Activated CD8-positive, alpha-beta memory T cell treated with anti-CD3 and anti-CD28 coated beads, Interleukin-2, amount 10 ng/mL, durations not matched to agents 7 days and 5 days (primary cell): ENCODE measurements at regions of chr6 and their contacts with region 1.

Region 1: DNA sequence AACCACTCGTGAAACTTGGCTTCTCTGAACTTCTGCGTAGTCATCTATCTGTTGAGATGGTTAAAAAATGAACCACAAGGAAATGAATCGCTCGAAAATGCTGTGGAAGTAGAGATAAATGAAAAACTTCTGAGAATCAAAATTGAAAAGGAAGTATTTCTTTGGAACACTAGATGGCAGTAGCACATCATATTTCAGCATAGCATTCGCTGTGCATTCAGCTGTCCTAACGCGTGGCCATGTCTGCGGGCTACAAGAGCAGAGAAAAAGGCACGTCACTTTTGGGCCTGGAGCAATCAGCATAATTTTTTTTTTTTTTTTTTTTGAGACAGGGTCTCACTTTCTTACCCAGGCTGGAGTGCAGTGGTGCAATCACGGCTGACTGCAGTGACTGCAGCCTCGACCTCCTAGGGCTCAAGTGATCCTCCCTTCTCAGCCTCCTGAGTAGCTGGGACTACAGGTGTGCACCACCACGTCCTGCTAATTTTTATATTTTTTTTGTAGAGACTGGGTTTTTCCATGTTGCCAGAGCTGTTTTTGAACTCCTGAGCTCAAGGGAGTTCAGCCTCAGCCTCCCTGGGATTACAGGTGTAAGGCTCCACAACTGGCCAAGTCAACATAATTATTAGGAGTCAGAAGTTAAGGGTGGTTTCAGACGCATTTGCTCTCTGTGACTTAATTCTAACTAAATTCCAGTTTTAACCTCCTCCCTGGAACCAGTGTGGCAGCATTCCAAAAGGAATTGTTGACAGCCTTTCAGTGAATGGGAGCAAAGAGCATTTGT is 8.8 kb upstream of the PERP start:
- DNase-seq: peak; percentile 58
- ATAC-seq: peak; percentile 88
- H3K4me3 Mint-ChIP-seq: no peak overlapping the region
- H3K27ac Mint-ChIP-seq: no peak overlapping the region
- H3K4me1 Mint-ChIP-seq: peaks cover 6% of the 10 kb centered on the region
- H3K27me3 Mint-ChIP-seq: peaks cover 37% of the 10 kb centered on the region

Region 2: GRCh38 chr6:138001750-138002349 is 114.2 kb before region 1 on chr6:
- CTCF ChIA-PET with region 1: interaction called, 23 read pairs
- DNase-seq: peak; percentile 77
- ATAC-seq: no peak
- H3K4me3 Mint-ChIP-seq: no peak overlapping the region
- H3K27ac Mint-ChIP-seq: no peak overlapping the region
- H3K4me1 Mint-ChIP-seq: peaks cover 11% of the 10 kb centered on the region
- H3K27me3 Mint-ChIP-seq: peaks cover 3% of the 10 kb centered on the region

Region 3: DNA sequence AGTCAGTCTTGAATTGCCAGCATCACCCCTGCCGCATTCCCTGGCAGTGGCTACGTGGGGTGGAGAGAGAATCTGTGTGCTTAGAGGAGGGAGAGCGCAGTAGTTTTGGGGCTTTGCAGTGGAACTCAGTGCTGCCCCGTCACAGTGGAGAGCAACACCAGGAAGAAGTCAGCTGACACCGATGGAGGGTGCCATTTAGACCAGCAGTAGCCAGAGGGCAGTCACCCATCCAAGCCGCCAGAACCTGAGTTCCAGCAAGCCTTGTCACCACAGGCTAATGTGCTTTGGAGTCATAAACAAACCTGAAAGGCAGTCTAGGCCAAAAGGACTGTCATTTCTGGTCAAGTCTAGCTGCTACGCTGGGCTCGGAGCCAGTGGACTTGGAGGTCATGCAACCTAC is 13.1 kb after region 1 on chr6:
- CTCF ChIA-PET with region 1: interaction called, 10 read pairs
- DNase-seq: no peak
- ATAC-seq: no peak
- H3K4me3 Mint-ChIP-seq: no peak overlapping the region
- H3K27ac Mint-ChIP-seq: no peak overlapping the region
- H3K4me1 Mint-ChIP-seq: no peaks in the 10 kb centered on the region
- H3K27me3 Mint-ChIP-seq: peaks cover 40% of the 10 kb centered on the region

Region 4: GRCh38 chr6:138287144-138287955 is 171.3 kb after region 1 on chr6:
- CTCF ChIA-PET with region 1: interaction called, 44 read pairs
- DNase-seq: peak; percentile 61
- ATAC-seq: peak; percentile 64
- H3K4me3 Mint-ChIP-seq: no peak overlapping the region
- H3K27ac Mint-ChIP-seq: no peak overlapping the region
- H3K4me1 Mint-ChIP-seq: no peaks in the 10 kb centered on the region
- H3K27me3 Mint-ChIP-seq: no peaks in the 10 kb centered on the region

Region 5: GRCh38 chr6:138509371-138509770 is 393.3 kb after region 1 on chr6:
- CTCF ChIA-PET with region 1: interaction called, 29 read pairs
- DNase-seq: peak; percentile 67
- ATAC-seq: peak; percentile 47
- H3K4me3 Mint-ChIP-seq: no peak overlapping the region
- H3K27ac Mint-ChIP-seq: no peak overlapping the region
- H3K4me1 Mint-ChIP-seq: peaks cover 3% of the 10 kb centered on the region
- H3K27me3 Mint-ChIP-seq: peaks cover 31% of the 10 kb centered on the region

Region 6: GRCh38 chr6:138517635-138518034 is 401.6 kb after region 1 on chr6:
- CTCF ChIA-PET with region 1: interaction called, 29 read pairs
- DNase-seq: peak; percentile 73
- ATAC-seq: peak; percentile 83
- H3K4me3 Mint-ChIP-seq: no peak overlapping the region
- H3K27ac Mint-ChIP-seq: no peak overlapping the region
- H3K4me1 Mint-ChIP-seq: peaks cover 31% of the 10 kb centered on the region
- H3K27me3 Mint-ChIP-seq: peaks cover 21% of the 10 kb centered on the region

Region 7: GRCh38 chr6:138588805-138589434 is 472.9 kb after region 1 on chr6:
- CTCF ChIA-PET with region 1: interaction called, 13 read pairs
- DNase-seq: peak; percentile 60
- ATAC-seq: peak; percentile 25
- H3K4me3 Mint-ChIP-seq: no peak overlapping the region
- H3K27ac Mint-ChIP-seq: no peak overlapping the region
- H3K4me1 Mint-ChIP-seq: peaks cover 33% of the 10 kb centered on the region
- H3K27me3 Mint-ChIP-seq: peaks cover 5% of the 10 kb centered on the region